Activated CD4-positive, alpha-beta T cell treated with anti-CD3 and anti-CD28 coated beads, Interleukin-2, amount 10 ng/mL, durations not matched to agents 24 days and 14 days (primary cell): ENCODE measurements at regions of chr3 and their contacts with region 1.

Region 1: DNA sequence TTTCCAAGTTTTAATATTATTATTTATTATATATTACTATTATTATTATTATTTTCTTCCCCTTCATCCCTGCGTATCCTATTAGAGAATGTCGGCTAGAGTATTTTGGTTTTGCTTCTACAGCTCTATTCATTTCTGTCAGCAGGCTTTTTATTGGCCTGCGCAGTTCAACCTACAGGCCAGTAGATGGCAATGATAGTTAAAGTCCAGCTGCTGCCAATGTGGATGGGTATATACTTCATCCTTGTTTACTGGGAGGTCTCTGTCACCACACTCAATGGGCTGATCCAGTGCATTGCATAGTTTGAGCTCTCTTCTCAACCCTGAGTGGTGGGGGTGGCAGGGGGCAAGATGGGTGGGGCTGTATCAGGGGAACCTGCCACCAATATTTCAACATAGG is 799.8 kb downstream of the NSUN3 start:
- DNase-seq: no peak
- H3K4me3 Mint-ChIP-seq: no peak overlapping the region
- H3K27ac Mint-ChIP-seq: no peak overlapping the region
- H3K4me1 Mint-ChIP-seq: no peaks in the 10 kb centered on the region
- H3K27me3 Mint-ChIP-seq: no peaks in the 10 kb centered on the region

Region 2: GRCh38 chr3:96813134-96813819 is 1950.6 kb after region 1 on chr3:
- intact Hi-C with region 1: loop called (anchors 5 kb)
- DNase-seq: peak; percentile 90
- H3K4me3 Mint-ChIP-seq: peak overlapping the region; percentile 78
- H3K27ac Mint-ChIP-seq: no peak overlapping the region
- H3K4me1 Mint-ChIP-seq: peaks cover 8% of the 10 kb centered on the region
- H3K27me3 Mint-ChIP-seq: peaks cover 34% of the 10 kb centered on the region